Left ventricle myocardium superior (tissue), 1 donor: ENCODE measurements at regions of chr13 and their contacts with region 1.

Region 1: DNA sequence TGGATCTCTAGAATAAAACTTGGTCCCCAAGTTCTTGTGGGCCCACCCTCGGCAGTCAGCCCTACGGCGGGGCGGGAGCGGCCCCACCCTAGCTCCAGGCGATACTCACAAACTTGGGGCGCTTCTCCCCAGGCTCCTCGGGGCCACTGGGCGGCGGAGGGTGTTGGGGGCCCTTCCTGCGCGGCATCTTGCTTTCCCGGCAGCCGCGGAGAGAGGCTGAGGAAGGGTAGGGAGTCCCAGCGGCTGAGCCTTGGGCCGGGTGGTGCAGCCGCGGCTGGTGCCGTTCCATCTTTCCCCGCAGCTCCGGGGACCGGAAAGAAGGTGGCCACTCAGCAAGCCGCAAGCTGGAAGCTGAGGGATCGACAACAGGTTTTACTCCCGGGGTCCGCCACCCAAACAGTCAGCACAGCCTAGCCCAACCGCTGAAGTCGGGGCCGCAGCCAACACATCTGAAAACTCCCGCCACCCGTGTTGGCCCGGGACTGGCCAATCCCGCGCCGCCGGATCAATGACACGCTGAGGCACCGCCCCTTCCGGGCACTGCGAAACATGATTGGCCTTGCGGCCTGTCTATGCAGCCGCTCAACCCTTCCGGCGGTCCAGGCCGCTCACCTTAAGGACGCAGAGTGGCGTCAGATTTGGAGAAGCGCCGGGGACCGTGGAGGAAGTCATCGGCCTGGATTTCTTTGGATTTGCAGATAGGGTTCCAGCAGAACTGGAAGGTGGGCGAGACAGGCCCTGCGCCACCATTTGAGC is at the start of gene DIAPH3:
- DNase-seq: peak; percentile 98
- ATAC-seq: peak; percentile 100
- total RNA-seq, gene DIAPH3: 0.22 TPM

Region 2: DNA sequence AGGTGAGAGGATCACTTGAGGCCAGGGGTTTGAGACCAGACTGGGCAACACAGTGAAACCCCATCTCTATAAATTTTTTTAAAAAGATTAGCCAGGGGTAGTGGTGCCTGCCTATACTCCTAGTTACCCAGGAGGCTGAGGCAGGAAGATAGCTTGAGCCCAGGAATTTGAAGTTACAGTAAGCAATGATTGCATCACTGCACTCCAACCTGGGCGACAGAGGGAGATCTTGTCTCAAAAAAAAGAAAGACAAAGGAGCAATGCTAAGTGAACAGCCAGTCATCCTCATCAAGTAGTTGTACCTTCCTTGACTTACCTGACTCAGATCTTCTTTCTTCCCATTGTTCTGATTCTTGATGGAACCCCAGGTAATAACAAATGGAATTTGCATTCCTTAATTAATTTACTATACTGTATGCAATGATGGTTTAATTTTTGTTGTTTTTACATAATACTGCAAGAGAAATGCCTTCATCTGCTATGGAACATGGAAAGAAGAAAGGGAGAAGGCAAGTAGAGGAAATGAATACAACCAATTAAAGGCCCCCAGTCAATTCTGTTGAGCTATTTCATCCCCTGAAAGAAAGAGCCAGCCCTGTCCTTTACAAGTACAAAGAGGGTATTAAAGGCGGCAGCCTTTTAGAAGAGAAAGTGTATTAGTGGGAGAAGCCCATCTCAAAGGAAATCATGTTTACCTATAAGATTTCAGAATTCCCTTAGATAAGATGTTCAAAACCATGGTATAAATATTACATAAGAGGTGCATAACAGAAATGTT is 316.6 kb before region 1 on chr13:
- intact Hi-C with region 1: no loop called
- DNase-seq: no peak
- ATAC-seq: no peak

Region 3: DNA sequence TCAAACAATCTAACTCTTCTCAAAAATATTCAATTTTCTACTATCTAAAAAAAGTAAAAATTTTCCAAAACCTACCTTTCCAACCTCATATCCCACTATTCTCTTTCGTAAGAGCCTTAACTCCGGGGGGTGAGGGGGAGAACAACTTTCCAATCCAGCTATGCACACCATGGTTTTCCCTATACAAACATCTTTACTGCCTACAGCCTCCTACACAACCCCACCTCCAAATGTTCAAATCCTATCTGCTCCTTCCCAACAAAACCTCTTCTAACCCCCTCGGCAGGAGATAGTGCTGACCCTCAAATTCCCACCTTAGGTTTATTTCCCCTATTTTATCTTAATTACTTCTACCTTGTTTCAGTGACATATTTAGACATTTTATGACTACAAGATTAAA is 101.9 kb before region 1 on chr13:
- intact Hi-C with region 1: no loop called
- DNase-seq: no peak
- ATAC-seq: no peak

Region 4: GRCh38 chr13:60448907-60449510 is 285.4 kb after region 1 on chr13:
- intact Hi-C with region 1: loop called (anchors 10 kb)
- DNase-seq: no peak
- ATAC-seq: peak; percentile 47

Region 5: GRCh38 chr13:60514891-60515290 is 351.2 kb after region 1 on chr13:
- intact Hi-C with region 1: no loop called
- DNase-seq: no peak
- ATAC-seq: no peak